Calu3 (cell line): ENCODE measurements at regions of chr5 and their contacts with region 1.

Region 1: DNA sequence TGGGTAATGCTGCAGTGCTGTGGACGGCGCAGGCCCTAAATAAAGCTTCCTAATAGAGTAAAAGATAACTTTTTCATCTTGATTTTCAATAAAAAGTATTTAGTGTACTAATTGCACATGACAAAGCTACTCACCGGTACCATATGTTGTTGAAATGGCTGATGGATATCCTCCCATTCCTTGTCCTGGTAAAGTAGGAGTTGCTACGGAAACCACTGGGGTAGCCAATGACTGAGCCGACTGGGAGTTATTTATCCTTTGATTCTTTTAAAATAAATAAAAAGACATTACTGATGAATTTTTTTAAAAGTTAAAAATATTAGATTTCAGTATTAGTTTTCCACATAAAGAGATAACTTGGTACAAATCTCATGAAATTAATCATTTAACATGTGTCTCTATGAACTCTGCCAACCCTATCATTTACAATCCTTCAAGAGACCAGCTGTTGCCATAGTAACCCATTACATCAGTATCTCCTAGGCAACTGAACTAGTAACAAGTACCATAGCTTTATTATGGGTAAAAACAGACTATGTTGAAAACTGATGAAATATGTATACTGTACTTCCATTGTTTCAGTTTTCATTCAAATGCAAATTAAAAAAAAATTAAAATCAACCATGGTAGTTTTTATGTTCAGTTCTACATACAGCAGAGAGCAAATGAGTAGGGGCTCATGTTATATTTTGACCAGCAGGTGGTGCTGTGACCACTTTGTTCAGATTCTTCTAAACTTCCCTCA is 153.7 kb downstream of the MEF2C start:
- DNase-seq: peak; percentile 68
- H3K4me3 Mint-ChIP-seq: no peak overlapping the region
- H3K27ac Mint-ChIP-seq: no peak overlapping the region
- H3K4me1 Mint-ChIP-seq: no peaks in the 10 kb centered on the region
- H3K27me3 Mint-ChIP-seq: no peaks in the 10 kb centered on the region
- CTCF ChIP-seq: peak; percentile 61

Region 2: DNA sequence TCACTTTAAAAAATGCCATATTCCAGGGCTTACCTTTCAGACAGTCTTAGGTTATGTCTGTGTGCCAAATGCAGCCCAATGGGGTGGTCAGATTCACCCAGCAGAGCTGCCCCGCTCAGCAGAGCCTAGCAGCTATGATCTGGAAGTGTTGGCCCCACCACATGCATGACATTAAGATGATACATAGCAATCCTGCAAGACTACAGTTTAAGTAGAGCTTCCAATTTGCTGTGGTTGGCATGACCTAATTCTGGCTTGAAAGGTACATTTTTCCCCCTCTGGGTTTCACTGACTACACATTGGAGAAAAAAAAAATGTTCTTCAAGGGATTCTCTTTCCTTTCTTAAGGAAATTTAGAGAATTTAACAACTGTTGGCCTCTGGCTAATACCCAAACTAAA is 131.2 kb after region 1 on chr5:
- CTCF ChIA-PET with region 1: no interaction called
- intact Hi-C with region 1: no loop called
- DNase-seq: no peak
- H3K4me3 Mint-ChIP-seq: no peak overlapping the region
- H3K27ac Mint-ChIP-seq: no peak overlapping the region
- H3K4me1 Mint-ChIP-seq: no peaks in the 10 kb centered on the region
- H3K27me3 Mint-ChIP-seq: no peaks in the 10 kb centered on the region
- CTCF ChIP-seq: no peak

Region 3: DNA sequence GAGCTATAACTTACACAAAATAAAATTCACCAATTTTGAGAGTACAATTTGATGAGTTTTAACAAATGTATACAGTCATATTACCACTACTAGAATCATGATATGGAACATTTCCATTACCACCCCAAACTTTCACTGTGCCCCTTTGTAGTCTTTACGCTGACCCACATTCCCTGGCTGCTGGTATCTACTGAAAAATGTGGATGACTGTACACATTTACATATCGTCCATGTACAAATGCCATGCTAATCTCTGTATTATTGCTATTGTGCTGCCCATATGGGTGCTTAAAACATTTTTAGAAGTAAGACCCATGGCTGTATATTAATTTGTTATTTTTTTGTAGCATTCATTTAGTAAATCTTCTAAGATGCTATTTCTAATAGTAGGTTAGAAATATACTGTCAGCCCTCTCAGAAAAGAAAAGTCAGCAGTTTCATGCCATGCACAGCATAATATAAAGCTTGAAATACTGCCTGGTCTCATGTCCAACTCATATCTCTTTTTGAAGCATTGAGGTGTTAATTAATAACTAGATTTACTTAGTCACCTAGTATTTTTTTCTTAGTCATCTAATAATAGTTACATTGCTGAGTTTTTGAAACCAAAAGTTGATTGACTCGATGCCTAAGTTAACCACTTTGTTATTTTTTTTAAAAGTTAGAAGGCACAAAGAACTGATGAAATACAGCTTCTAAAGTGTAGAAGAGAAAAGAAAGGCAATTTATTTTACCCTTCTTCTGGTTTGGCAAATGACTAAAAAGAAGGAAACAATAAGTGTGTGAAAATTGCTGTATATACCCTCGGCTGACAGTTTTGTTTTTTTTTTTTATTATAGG is 342.1 kb after region 1 on chr5:
- CTCF ChIA-PET with region 1: no interaction called
- intact Hi-C with region 1: loop called (anchors 5 kb)
- DNase-seq: no peak
- H3K4me3 Mint-ChIP-seq: peak overlapping the region; percentile 46
- H3K27ac Mint-ChIP-seq: peak overlapping the region; percentile 84
- H3K4me1 Mint-ChIP-seq: peaks cover 25% of the 10 kb centered on the region
- H3K27me3 Mint-ChIP-seq: no peaks in the 10 kb centered on the region
- CTCF ChIP-seq: no peak

Region 4: DNA sequence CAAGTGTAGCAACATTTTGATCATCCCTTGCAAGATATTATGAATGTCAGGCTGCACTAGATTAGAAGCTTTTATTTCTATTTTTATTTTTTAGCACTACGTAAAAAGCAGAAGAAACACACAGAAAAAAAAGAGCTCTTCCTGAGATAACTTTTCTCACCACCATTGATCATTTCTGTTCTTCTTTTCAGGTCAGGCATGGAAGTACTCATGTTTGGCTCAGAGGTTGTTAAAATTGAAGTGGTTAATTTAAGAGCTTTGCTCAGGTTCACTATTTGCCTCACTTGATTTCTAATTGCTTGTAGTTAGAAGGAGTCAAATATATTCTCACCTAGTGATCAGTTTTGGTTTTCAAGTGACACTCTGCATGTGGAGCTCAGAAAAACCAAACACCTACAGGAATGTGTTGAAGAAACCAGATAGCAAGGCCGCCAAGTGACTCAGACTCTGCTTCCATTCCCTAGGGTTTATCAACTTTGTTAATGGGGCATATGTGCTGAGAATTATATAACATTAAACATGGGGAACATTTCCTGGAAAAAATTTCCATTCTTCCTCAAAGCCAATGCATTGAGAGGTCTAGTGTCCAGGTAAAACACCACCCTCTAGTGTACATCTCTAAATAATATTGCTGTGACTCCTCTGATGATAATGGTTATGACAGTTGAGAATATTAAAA is 1000.5 kb after region 1 on chr5:
- CTCF ChIA-PET with region 1: interaction called, 8 read pairs
- intact Hi-C with region 1: loop called (anchors 2 kb)
- DNase-seq: no peak
- H3K4me3 Mint-ChIP-seq: no peak overlapping the region
- H3K27ac Mint-ChIP-seq: no peak overlapping the region
- H3K4me1 Mint-ChIP-seq: peaks cover 9% of the 10 kb centered on the region
- H3K27me3 Mint-ChIP-seq: no peaks in the 10 kb centered on the region
- CTCF ChIP-seq: peak; percentile 41

Region 5: GRCh38 chr5:90264689-90265544 is 1535.7 kb after region 1 on chr5:
- CTCF ChIA-PET with region 1: no interaction called
- intact Hi-C with region 1: loop called (anchors 1 kb)
- DNase-seq: peak; percentile 75
- H3K4me3 Mint-ChIP-seq: no peak overlapping the region
- H3K27ac Mint-ChIP-seq: no peak overlapping the region
- H3K4me1 Mint-ChIP-seq: no peaks in the 10 kb centered on the region
- H3K27me3 Mint-ChIP-seq: no peaks in the 10 kb centered on the region
- CTCF ChIP-seq: peak; percentile 85

Region 6: DNA sequence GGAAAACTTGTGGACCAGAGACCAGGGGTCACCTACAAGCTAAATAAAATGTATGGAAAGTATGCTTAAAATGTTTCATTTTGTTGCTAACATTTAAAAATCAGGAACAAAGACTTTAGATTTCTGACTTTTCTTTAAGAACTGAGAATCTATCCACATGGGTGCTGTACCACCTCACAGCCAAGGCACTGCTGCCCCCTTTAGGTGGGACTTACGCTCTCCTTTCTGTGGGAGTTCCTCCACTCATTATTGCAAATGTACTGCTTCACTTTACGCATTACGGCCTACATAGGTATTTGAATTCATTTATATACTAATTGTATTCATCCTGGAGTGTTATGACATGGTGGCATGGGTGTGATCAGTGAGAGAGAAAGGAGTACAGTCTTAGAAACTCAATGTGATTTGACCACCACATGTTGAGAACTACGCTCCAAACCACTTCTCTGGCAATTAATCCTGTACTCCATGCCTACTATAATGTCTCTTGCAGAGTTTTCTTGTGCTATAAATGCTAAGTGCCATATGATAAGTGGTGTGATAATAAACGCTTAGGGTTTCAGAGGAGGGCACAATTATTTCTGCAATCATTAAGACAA is 1705.0 kb after region 1 on chr5:
- CTCF ChIA-PET with region 1: interaction called, 3 read pairs
- intact Hi-C with region 1: loop called (anchors 5 kb)
- DNase-seq: peak; percentile 76
- H3K4me3 Mint-ChIP-seq: no peak overlapping the region
- H3K27ac Mint-ChIP-seq: no peak overlapping the region
- H3K4me1 Mint-ChIP-seq: peaks cover 12% of the 10 kb centered on the region
- H3K27me3 Mint-ChIP-seq: peaks cover 25% of the 10 kb centered on the region
- CTCF ChIP-seq: peak; percentile 71